Common myeloid progenitor, CD34-positive (primary cell): ENCODE measurements at regions of chr15 and their contacts with region 1.

Region 1: DNA sequence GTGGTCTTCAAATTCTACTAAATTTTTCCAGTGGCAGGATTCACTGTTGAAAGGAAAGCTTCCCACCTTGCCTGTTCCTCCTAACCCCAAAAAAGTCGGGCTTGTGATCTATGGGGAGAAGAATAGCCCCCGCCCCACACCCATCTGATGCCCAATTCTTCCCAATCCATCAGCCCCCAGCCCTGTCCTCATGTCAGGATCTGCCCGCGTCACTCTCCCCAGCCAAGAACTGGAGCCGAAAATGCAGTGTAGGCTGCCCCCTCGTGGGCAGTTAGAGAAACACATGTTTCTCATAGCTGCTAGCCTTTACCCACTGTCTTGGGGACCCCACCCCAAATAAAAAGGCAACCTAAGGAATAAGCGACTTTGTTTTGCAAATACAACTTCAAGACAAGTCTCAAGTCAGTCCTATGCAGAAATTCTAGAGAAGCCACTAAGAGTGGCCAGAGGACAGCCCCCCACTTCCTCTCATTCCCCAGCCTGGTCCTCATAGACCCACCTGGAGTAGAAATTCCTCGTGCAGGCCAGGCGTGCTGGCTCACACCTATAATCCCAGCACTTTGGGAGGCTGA is 13.0 kb upstream of the CSK start:
- DNase-seq: peak in 2 of 3 donors; percentile 68 to 69
- H3K4me3 ChIP-seq: peak overlapping the region in 2 of 7 experiments; percentile 26 to 48
- H3K27ac ChIP-seq: no peak overlapping the region
- H3K4me1 ChIP-seq: peaks cover 0 to 34% (median 16%) of the 10 kb centered on the region in 4 experiments
- H3K27me3 ChIP-seq: peaks cover 0 to 4% (median 0%) of the 10 kb centered on the region in 5 experiments

Region 2: GRCh38 chr15:74373731-74374647 is 394.9 kb before region 1 on chr15:
- CTCF ChIA-PET with region 1: interaction called, 12 read pairs
- POLR2A ChIA-PET with region 1: no interaction called
- DNase-seq: peak; percentile 87 to 95 (median 94)
- H3K4me3 ChIP-seq: peak overlapping the region; percentile 27 to 83 (median 66)
- H3K27ac ChIP-seq: no peak overlapping the region
- H3K4me1 ChIP-seq: peaks cover 2 to 31% (median 28%) of the 10 kb centered on the region in 4 experiments
- H3K27me3 ChIP-seq: peaks cover 0 to 3% (median 0%) of the 10 kb centered on the region in 5 experiments

Region 3: GRCh38 chr15:74642729-74643367 is 126.0 kb before region 1 on chr15:
- CTCF ChIA-PET with region 1: interaction called, 735 read pairs
- POLR2A ChIA-PET with region 1: interaction called, 4 read pairs
- DNase-seq: peak; percentile 29 to 77 (median 70)
- H3K4me3 ChIP-seq: no peak overlapping the region
- H3K27ac ChIP-seq: peak overlapping the region; percentile 2 to 38
- H3K4me1 ChIP-seq: peaks cover 0 to 38% (median 12%) of the 10 kb centered on the region in 4 experiments
- H3K27me3 ChIP-seq: no peaks in the 10 kb centered on the region

Region 4: GRCh38 chr15:74793135-74794028 is 24.5 kb after region 1 on chr15:
- CTCF ChIA-PET with region 1: interaction called, 1,027 read pairs
- POLR2A ChIA-PET with region 1: interaction called, 29 read pairs
- DNase-seq: peak in 2 of 3 donors; percentile 78 to 81
- H3K4me3 ChIP-seq: no peak overlapping the region
- H3K27ac ChIP-seq: peak overlapping the region; percentile 19 to 89
- H3K4me1 ChIP-seq: peaks cover 38 to 86% (median 81%) of the 10 kb centered on the region in 4 experiments
- H3K27me3 ChIP-seq: no peaks in the 10 kb centered on the region

Region 5: DNA sequence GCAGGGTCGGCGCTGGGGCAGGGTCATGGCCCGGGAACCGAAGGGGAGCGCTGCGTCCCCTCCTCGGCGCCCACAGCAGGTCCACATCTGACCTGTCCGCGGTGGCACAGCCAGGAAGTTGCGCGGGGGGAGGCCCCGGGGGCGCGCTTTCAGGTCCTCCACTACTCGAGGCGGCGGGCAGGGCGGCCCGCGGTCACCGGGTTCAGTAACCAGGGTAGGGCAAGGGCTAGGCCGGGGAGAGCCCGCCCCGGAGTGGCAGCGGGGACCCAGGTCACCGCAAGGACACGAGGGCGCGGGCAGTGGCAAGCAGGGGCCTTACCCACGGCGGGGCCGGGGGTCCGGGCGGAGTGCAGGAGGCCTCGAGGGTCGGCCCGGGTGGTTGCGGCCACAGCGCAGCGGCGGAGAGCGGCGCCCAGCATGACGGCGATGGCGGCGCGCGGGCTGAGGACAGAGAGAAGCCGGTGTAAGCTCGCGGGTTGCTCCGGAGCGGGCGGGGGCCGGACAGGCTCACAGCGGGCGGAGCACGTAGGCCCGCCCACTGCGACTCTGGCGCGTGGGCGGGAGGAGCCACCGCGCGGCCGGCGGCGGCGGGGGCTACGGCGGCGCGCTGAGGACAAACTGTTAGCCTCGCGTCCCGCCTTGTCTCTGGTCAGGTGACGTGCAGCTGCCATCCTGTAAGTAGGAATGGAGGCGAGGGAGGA is 168.9 kb after region 1 on chr15 and contains the start of gene COX5A:
- CTCF ChIA-PET with region 1: interaction called, 12 read pairs
- POLR2A ChIA-PET with region 1: no interaction called
- DNase-seq: peak; percentile 95 to 98 (median 97)
- H3K4me3 ChIP-seq: peak within 1 kb of the TSS; percentile 90 to 99 (median 94)
- H3K27ac ChIP-seq: peak within 1 kb of the TSS; percentile 75 to 91
- H3K4me1 ChIP-seq: peaks cover 0 to 23% (median 11%) of the 10 kb centered on the region in 4 experiments
- H3K27me3 ChIP-seq: no peaks in the 10 kb centered on the region